ENCODE measurements at regions of chr13 and their contacts with region 1.

Region 1: DNA sequence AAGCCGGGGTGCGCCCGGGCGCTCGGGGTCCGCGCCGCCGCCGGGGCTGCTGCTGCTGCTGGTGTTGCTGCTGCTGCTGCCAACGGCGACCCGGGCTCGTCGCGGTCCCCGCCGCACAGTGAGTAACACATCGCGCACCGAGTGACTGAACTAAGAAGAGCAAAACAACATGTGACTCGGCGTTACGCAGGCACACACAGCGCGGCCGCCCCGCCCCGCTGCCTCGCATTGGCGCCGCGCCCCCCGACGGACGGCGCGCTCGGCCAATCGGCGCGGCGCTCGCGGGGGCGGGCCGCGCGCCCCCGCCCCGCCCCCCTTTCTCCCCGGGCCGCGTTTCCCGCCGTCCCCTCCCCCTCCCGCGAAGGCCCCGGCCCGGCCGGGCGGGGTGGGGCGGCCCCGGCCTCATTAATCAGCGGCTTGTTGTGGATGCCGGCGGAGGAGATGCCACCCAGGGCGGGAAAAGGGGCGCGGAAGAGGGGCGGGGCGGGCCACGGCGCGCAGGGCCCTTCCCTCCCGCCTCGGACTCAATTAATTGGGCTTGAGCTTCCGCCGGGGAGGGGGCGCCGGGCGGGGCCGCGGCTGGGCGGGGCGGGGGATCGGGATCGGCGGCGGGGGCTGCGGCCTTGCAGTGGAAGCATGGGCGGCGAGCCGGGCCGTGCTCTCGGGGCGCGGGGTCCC is at the start of gene IRS2:
- DNase-seq: peak; percentile 92 to 95
- H3K4me3 ChIP-seq: peak within 1 kb of the TSS; percentile 100
- H3K27ac ChIP-seq: peak within 1 kb of the TSS; percentile 83
- H3K4me1 ChIP-seq: peaks cover 40% of the 10 kb centered on the region
- H3K27me3 ChIP-seq: no peaks in the 10 kb centered on the region
- CTCF ChIP-seq: no peak
- total RNA-seq, gene IRS2: 31.3 and 39.2 TPM in 2 replicates

Region 2: DNA sequence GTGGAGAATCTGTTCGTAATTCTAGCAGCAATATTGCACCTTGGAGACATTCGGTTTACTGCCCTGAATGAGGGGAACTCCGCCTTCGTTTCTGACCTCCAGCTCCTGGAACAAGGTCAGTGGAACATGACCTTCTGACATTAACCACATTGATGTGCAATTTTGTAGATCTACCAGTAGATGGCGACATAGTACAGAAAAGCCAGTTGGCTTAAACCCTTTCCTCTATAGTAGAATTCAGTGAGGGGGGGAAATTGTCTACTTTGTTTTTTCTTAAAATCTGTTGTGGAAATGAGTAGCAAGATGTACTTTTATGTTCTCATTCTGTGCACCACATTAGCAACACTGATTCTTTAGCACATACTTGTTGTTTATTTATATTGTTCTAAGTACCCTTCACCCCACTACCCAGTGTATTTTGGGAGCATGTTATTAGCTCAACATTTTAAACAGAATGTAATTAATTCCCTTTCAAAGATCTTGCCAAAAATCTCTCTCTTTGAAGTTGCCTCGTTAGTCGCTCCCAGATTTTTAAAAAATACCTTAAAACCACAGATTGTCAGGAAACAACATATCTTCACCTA is 825.0 kb before region 1 on chr13:
- CTCF ChIA-PET with region 1: no interaction called
- POLR2A ChIA-PET with region 1: no interaction called
- intact Hi-C with region 1: loop called (anchors 2 kb)
- DNase-seq: peak in 1 of 2 experiments; percentile 63
- H3K4me3 ChIP-seq: no peak overlapping the region
- H3K27ac ChIP-seq: peak overlapping the region; percentile 25
- H3K4me1 ChIP-seq: peaks cover 46% of the 10 kb centered on the region
- H3K27me3 ChIP-seq: no peaks in the 10 kb centered on the region
- CTCF ChIP-seq: peak; percentile 98

Region 3: DNA sequence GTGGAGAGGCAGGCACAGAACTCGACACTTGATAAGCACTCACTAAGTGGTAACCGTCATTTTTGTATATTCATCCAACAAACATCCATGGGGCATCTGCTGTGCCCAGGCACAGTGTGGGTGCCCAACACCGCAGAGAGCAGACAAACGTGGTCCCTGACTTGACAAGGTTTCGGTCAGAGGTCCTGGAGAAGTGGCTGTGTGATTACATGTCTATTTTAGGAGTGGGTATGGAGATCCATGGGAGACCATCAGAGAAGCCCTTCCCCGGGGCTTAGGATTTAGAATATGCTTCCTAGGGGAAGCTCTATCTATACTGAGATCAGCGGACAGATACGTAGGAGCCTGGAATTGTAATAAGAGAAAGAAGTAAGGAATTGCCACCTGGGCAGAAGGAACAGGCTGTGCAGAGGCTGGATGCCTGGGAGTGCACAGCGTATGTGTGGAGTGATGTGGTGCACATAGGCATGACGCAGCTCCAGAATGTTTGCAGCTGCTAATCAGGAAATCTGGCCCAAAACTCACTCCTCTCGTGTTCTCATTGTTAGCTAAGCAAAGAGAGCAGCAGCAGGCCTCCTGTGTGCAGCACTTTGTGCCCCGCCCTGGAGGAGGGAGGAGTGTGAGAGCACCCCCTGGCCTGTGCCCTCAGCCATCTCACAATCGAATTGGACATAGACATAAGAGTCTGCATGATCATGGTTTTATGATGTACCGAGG is 22.8 kb after region 1 on chr13:
- CTCF ChIA-PET with region 1: no interaction called
- POLR2A ChIA-PET with region 1: no interaction called
- intact Hi-C with region 1: no loop called
- DNase-seq: no peak
- H3K4me3 ChIP-seq: no peak overlapping the region
- H3K27ac ChIP-seq: no peak overlapping the region
- H3K4me1 ChIP-seq: peaks cover 5% of the 10 kb centered on the region
- H3K27me3 ChIP-seq: no peaks in the 10 kb centered on the region
- CTCF ChIP-seq: no peak

Region 4: DNA sequence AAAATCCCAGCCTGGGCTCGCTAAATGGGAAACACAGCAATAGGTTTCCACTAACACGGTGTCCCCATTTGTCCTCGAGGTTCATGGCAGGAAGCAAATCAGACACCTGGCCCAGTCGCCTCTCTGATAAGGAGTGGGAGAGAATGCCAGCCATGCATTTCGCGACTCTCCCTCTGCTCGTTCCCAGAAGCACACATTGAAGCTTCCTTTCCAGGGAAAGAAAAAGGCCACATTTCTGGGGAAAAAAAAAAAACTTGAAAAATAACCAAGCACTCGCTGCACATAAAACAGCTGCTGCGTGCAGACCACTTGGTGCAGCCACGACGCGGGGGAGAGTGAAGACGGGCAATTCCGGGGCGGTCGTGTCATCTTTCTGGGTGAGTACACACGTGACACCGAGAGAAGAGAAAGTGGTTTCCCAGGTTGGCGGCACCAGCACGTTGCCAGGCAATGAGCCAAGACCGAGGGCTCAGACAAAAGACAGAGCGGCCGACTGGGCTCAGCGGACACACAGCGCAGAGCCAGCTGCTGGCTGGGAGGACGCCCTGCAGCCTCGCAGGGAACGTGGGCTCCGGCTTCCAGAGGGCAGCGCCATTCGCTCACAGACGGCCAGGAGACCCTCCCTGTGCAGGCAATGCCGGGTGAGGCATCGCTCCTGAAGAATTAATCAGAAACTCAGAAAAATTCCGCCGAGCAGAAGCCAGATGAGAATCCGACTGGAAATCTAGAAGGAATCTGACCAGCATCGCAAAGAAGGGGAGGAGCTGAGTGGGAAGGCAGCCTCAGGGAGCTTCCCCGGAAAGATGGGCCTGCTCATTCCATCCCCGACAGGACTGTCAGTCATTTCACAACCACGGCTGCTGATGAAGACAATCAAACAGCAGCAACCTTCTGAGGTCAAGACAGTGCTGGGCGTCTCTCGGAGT is 83.0 kb after region 1 on chr13:
- CTCF ChIA-PET with region 1: no interaction called
- POLR2A ChIA-PET with region 1: no interaction called
- intact Hi-C with region 1: loop called (anchors 1 kb)
- DNase-seq: peak; percentile 82
- H3K4me3 ChIP-seq: peak overlapping the region; percentile 54; the same call in 1 of the 2 replicates
- H3K27ac ChIP-seq: peak overlapping the region; percentile 79
- H3K4me1 ChIP-seq: peaks cover 82% of the 10 kb centered on the region
- H3K27me3 ChIP-seq: no peaks in the 10 kb centered on the region
- CTCF ChIP-seq: peak; percentile 40; the same call in 1 of the 2 replicates

Region 5: DNA sequence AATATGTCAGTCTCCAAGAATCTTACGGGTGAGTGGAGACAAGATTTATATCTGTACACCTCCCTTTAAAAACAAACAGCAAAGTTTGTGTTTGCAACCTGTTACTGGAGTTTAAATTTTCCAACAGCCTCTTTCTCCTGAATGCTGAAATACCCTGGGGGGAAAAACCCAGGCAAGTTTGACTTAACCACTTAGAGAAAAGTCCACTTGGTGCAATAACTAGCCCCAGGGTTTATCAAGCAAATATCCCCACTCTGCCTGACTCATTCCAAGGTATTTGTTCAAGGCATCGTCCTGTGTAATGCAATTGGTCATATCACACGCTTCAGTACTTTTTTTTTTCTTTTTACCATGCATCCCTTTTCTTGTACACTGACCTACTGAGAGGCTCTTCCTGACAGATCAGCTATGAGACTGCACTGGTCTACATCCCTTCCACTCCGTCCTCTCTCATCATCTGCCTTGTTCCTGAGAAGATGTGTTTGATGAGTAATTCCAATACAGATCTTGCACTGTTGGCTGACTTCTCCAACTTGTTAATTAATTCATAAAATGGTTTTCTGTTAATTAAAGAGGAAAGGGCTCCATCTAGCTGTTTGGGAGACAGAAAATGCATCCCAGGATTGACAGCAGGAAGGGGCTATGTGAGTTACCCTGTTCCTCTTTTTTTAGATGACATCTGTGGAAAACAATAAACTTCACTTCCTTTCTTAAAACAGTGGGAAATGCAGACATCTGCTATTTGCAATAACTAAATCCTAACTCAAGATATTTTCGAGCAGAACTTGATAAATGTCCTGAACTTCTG is 212.3 kb after region 1 on chr13:
- CTCF ChIA-PET with region 1: interaction called, 3 read pairs
- POLR2A ChIA-PET with region 1: no interaction called
- intact Hi-C with region 1: loop called (anchors 2 kb)
- DNase-seq: peak; percentile 71 to 100
- H3K4me3 ChIP-seq: peak overlapping the region; percentile 1; the same call in 1 of the 2 replicates
- H3K27ac ChIP-seq: peak overlapping the region; percentile 45
- H3K4me1 ChIP-seq: peaks cover 50% of the 10 kb centered on the region
- H3K27me3 ChIP-seq: no peaks in the 10 kb centered on the region
- CTCF ChIP-seq: peak; percentile 33; the same call in 1 of the 2 replicates

Region 6: GRCh38 chr13:110017379-110017778 is 230.8 kb after region 1 on chr13:
- CTCF ChIA-PET with region 1: interaction called, 7 read pairs
- POLR2A ChIA-PET with region 1: no interaction called
- intact Hi-C with region 1: loop called (anchors 1 kb)
- DNase-seq: peak; percentile 69 to 88
- H3K4me3 ChIP-seq: no peak overlapping the region
- H3K27ac ChIP-seq: peak overlapping the region; percentile 65
- H3K4me1 ChIP-seq: peaks cover 38% of the 10 kb centered on the region
- H3K27me3 ChIP-seq: no peaks in the 10 kb centered on the region
- CTCF ChIP-seq: no peak

Region 7: GRCh38 chr13:110073982-110074381 is 287.4 kb after region 1 on chr13:
- CTCF ChIA-PET with region 1: no interaction called
- POLR2A ChIA-PET with region 1: no interaction called
- intact Hi-C with region 1: no loop called
- DNase-seq: no peak
- H3K4me3 ChIP-seq: no peak overlapping the region
- H3K27ac ChIP-seq: no peak overlapping the region
- H3K4me1 ChIP-seq: peaks cover 8% of the 10 kb centered on the region; the same call in 1 of the 2 replicates
- H3K27me3 ChIP-seq: no peaks in the 10 kb centered on the region
- CTCF ChIP-seq: no peak

Region 8: GRCh38 chr13:110138010-110138699 is 351.6 kb after region 1 on chr13:
- CTCF ChIA-PET with region 1: no interaction called
- POLR2A ChIA-PET with region 1: no interaction called
- intact Hi-C with region 1: loop called (anchors 1 kb)
- DNase-seq: peak; percentile 82 to 94
- H3K4me3 ChIP-seq: peak overlapping the region; percentile 67
- H3K27ac ChIP-seq: peak overlapping the region; percentile 95
- H3K4me1 ChIP-seq: peaks cover 42% of the 10 kb centered on the region
- H3K27me3 ChIP-seq: no peaks in the 10 kb centered on the region
- CTCF ChIP-seq: peak; percentile 42; the same call in 1 of the 2 replicates

Region 9: GRCh38 chr13:110433014-110433413 is 646.4 kb after region 1 on chr13:
- CTCF ChIA-PET with region 1: no interaction called
- POLR2A ChIA-PET with region 1: no interaction called
- intact Hi-C with region 1: no loop called
- DNase-seq: peak; percentile 35 to 86
- H3K4me3 ChIP-seq: no peak overlapping the region
- H3K27ac ChIP-seq: no peak overlapping the region
- H3K4me1 ChIP-seq: no peaks in the 10 kb centered on the region
- H3K27me3 ChIP-seq: no peaks in the 10 kb centered on the region
- CTCF ChIP-seq: no peak

Measured in PC-9 (cell line).